ENCODE measurements at regions of chr16 and their contacts with region 1.

Region 1: DNA sequence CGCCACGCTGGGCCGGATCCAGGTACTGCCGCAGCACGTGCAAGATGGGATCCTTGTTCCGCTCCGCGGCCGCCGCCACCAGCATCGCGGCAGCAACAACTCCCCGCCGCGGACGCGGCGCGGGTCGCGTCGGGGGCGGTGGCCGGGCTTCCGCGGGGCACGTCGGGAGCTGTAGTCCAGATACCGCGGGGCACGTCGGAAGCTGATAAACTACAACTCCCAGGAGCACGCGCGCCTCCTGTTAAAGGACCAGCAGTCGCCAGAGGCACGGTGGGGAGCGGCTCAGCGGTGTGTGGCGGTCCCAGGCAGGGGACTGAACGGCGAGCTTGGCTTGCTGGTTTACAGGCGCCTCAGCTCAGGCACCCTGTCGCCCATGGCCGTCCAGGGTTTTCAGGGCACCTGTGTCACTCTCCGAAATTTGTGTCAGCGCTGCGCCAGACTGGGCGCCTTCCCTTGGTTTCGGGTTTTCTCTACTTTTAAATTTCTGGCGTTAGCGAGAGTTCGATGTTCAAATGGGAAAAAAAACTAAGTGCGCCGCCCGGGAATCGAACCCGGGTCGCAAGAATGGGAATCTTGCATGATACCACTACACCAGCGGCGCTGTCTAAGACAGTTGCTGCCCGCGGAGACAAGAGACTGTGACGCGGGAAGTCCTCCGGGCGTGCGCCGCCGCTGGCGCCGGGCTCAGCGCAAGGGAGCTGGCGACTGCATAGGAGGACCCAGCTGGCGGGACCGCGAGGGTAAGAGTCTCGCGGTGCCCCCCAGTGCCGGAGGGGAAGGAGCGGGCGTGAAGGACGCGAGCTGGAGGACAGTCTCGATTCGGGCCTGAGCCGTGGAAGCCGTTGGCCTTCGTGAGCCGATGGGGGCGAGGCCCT is at the start of gene METTL26:
- DNase-seq: peak; percentile 96
- H3K4me3 Mint-ChIP-seq: peak within 1 kb of the TSS; percentile 90
- H3K27ac Mint-ChIP-seq: peak within 1 kb of the TSS; percentile 89
- H3K4me1 Mint-ChIP-seq: peaks cover 5% of the 10 kb centered on the region
- H3K27me3 Mint-ChIP-seq: peaks cover 3% of the 10 kb centered on the region
- total RNA-seq, gene METTL26: 113 to 117 TPM

Region 2: DNA sequence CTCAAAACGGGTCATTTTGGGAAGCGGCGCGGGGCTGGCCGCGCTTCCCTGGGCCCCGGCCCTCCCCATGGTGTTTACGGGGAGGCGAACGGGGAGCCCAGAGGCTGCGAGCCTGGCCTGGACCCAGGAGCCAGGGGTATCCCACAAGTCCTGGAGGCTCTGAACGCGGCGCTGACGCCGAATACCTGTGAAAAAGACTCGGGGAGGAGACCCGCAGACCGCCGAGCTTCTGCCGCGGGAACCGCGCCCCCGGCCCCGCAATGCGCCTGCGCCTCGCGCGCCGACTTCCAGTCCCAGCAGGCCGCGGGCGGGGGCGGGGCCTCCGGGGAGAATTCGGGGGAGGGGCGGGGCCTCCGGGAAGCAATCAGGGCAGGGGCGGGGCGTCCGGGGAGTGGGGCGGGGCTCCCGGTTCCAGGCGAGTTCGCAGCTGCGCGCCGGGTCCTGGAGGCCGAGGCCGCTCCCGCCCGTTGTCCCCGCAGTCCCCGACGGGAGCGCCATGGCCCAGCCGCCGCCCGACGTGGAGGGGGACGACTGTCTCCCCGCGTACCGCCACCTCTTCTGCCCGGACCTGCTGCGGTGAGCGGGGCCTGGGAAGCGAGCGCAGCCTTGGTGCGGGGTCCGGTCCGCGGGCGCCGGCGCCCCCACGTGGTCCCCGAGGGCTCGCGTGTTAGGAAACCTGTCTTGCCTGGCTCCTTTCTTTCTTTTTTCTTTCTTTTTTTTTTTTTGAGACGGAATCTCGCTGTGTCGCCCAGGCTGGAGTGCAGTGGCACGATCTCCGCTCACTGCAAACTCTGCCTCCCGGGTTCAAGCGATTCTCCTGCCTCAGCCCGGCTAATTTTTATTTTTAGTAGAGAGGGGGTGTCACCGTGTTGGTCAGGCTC is 234.7 kb before region 1 on chr16 and contains the start of gene DECR2:
- CTCF ChIA-PET with region 1: no interaction called
- POLR2A ChIA-PET with region 1: no interaction called
- intact Hi-C with region 1: loop called (anchors 1 kb)
- DNase-seq: peak; percentile 99
- H3K4me3 Mint-ChIP-seq: peak within 1 kb of the TSS; percentile 84
- H3K27ac Mint-ChIP-seq: peak within 1 kb of the TSS; percentile 82
- H3K4me1 Mint-ChIP-seq: peaks cover 18% of the 10 kb centered on the region
- H3K27me3 Mint-ChIP-seq: no peaks in the 10 kb centered on the region
- total RNA-seq, gene DECR2: 8.5 to 8.8 TPM

Region 3: DNA sequence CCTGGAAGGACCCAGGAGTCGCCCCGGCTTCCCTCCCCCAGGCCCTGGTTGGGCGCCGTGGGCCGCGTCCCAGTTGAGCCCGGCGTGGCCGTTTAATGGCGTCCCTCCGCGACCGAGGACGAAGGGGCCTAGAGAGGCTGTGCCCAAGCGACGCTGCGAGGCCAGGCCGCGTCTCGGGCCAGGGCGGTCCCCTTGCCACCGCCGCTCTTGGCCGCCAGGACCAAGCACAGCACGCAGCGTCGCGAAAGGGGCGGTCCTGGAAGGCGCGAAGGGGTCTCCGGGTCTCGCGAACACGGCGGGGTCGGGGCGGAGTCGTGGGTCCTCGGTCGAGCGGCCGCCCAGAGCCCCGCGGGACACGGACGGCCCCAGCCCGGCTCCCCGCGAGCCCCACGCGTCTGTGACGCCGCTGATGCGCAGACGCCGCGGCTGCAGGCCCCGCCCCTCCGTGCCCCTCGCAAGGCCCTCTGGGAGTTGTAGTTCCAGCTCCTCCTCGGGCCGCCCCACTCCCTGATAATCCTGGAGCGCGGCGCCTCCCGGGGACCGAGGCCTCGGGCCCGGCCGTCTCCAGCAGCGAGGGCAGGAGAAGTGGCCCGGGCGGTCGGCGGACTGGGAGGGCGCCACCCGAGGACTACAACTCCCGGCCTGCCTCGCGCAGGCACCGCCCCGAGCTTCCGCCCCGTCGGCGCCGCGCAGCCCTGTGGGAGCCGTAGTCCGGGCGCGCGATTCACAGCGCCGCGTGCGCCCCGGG is 109.3 kb before region 1 on chr16 and contains the start of gene CAPN15:
- CTCF ChIA-PET with region 1: no interaction called
- POLR2A ChIA-PET with region 1: interaction called, 4 read pairs
- intact Hi-C with region 1: loop called (anchors 1 kb)
- DNase-seq: peak; percentile 88
- H3K4me3 Mint-ChIP-seq: peak within 1 kb of the TSS; percentile 91
- H3K27ac Mint-ChIP-seq: peak within 1 kb of the TSS; percentile 99
- H3K4me1 Mint-ChIP-seq: peaks cover 39% of the 10 kb centered on the region
- H3K27me3 Mint-ChIP-seq: no peaks in the 10 kb centered on the region
- total RNA-seq, gene CAPN15: 69.7 to 76.2 TPM

Region 4: GRCh38 chr16:648781-649589 is 12.5 kb after region 1 on chr16 and contains the start of gene WDR90:
- CTCF ChIA-PET with region 1: interaction called, 13 read pairs
- POLR2A ChIA-PET with region 1: interaction called, 16 read pairs
- intact Hi-C with region 1: no loop called
- DNase-seq: peak; percentile 95
- H3K4me3 Mint-ChIP-seq: peak within 1 kb of the TSS; percentile 79
- H3K27ac Mint-ChIP-seq: peak within 1 kb of the TSS; percentile 56
- H3K4me1 Mint-ChIP-seq: peaks cover 16% of the 10 kb centered on the region
- H3K27me3 Mint-ChIP-seq: no peaks in the 10 kb centered on the region
- total RNA-seq, gene WDR90: 52.8 to 58.2 TPM

Region 5: DNA sequence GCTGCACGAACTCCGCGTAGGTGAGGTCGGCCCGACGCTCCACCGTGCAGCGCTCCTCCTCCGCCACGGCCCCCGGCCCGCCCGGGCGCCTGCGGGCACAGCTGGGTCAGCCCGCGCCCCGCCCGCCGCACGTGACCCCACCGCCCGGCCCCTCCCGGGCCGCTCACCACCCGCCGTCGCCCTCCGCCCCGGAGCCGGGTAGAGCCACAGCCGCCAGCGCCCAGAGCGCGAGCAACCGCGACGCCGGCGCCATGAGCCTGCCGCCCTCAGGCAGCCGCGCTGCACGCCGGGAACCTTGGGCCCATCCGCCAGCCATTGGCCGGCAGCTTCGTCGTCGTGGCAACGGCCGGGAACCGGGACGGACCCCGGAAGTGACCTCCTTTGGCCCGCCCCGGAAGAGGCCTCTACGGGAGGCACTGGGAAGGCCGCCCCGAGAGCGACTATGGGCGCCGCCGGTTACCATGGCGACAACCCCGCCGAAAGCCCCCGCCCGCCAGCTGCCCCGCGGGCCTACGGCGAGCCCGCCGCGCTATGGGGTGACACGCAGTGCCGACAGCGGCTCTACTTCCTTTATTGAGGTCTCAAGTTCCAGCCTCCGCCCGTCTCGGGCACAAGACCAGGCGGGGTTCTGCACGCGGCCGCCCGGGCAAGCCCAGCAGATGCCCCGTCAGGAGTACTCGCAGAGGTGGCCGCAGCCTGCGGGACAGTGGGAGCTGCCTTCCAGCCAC is 47.8 kb after region 1 on chr16 and contains the start of gene JMJD8:
- CTCF ChIA-PET with region 1: no interaction called
- POLR2A ChIA-PET with region 1: no interaction called
- intact Hi-C with region 1: loop called (anchors 2 kb)
- DNase-seq: peak; percentile 98
- H3K4me3 Mint-ChIP-seq: peak within 1 kb of the TSS; percentile 82
- H3K27ac Mint-ChIP-seq: peak within 1 kb of the TSS; percentile 74
- H3K4me1 Mint-ChIP-seq: peaks cover 37% of the 10 kb centered on the region
- H3K27me3 Mint-ChIP-seq: no peaks in the 10 kb centered on the region
- total RNA-seq, gene JMJD8: 29.8 to 30.3 TPM

Region 6: GRCh38 chr16:740764-741505 is 104.5 kb after region 1 on chr16 and contains the start of gene CIAO3:
- CTCF ChIA-PET with region 1: no interaction called
- POLR2A ChIA-PET with region 1: no interaction called
- intact Hi-C with region 1: loop called (anchors 5 kb)
- DNase-seq: peak; percentile 95
- H3K4me3 Mint-ChIP-seq: peak within 1 kb of the TSS; percentile 82
- H3K27ac Mint-ChIP-seq: no peak within 1 kb of the TSS
- H3K4me1 Mint-ChIP-seq: peaks cover 23% of the 10 kb centered on the region
- H3K27me3 Mint-ChIP-seq: no peaks in the 10 kb centered on the region
- total RNA-seq, gene CIAO3: 31.8 to 32.2 TPM